ENCODE measurements at regions of chr7 and their contacts with region 1.

Region 1: GRCh38 chr7:9870674-9871073 is 1103.0 kb upstream of the PHF14 start:
- DNase-seq: no peak
- ATAC-seq: no peak
- H3K4me3 ChIP-seq: no peak overlapping the region
- H3K27ac ChIP-seq: no peak overlapping the region
- H3K4me1 ChIP-seq: no peaks in the 10 kb centered on the region
- H3K27me3 ChIP-seq: no peaks in the 10 kb centered on the region
- CTCF ChIP-seq: no peak

Region 2: DNA sequence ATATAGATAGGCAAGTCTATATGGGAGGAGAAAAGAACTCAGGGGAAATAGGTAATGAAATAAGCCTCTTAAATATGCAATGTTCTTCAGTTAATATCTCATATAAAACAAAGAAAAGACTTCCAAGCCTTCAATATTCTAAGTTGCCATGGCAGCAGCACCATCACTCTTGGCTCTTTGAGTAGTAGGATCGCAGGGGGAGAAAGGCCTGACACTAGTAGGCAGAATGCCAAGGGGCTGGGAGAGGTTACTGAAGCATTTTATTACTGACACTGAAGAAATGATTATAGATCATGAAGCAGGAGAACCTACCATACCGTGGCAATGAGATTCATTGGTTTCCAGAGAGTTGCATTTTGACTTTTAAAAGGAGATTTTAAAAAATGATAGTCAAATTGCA is 1243.3 kb before region 1 on chr7:
- intact Hi-C with region 1: no loop called
- DNase-seq: no peak
- ATAC-seq: no peak
- H3K4me3 ChIP-seq: no peak overlapping the region
- H3K27ac ChIP-seq: no peak overlapping the region
- H3K4me1 ChIP-seq: no peaks in the 10 kb centered on the region
- H3K27me3 ChIP-seq: no peaks in the 10 kb centered on the region
- CTCF ChIP-seq: no peak

Region 3: GRCh38 chr7:9796241-9796640 is 74.4 kb before region 1 on chr7:
- intact Hi-C with region 1: no loop called
- DNase-seq: no peak
- ATAC-seq: no peak
- H3K4me3 ChIP-seq: no peak overlapping the region
- H3K27ac ChIP-seq: no peak overlapping the region
- H3K4me1 ChIP-seq: no peaks in the 10 kb centered on the region
- H3K27me3 ChIP-seq: no peaks in the 10 kb centered on the region
- CTCF ChIP-seq: no peak

Region 4: GRCh38 chr7:9958486-9958885 is 87.8 kb after region 1 on chr7:
- intact Hi-C with region 1: loop called in 1 of 10 experiments (anchors 2 kb)
- DNase-seq: no peak
- ATAC-seq: no peak
- H3K4me3 ChIP-seq: no peak overlapping the region
- H3K27ac ChIP-seq: no peak overlapping the region
- H3K4me1 ChIP-seq: no peaks in the 10 kb centered on the region
- H3K27me3 ChIP-seq: no peaks in the 10 kb centered on the region
- CTCF ChIP-seq: no peak

Measured in heart right ventricle (tissue), 16 donors.